ENCODE measurements at regions of chr16 and their contacts with region 1.

Region 1: GRCh38 chr16:84599521-84600202 is 18.2 kb downstream of the COTL1 start:
- DNase-seq: peak; percentile 90
- ATAC-seq: peak; percentile 58
- H3K4me3 Mint-ChIP-seq: peak overlapping the region; percentile 74
- H3K27ac Mint-ChIP-seq: peak overlapping the region; percentile 97
- H3K4me1 Mint-ChIP-seq: peaks cover 94% of the 10 kb centered on the region
- H3K27me3 Mint-ChIP-seq: no peaks in the 10 kb centered on the region

Region 2: GRCh38 chr16:84641643-84642358 is 42.1 kb after region 1 on chr16:
- CTCF ChIA-PET with region 1: interaction called, 3 read pairs
- POLR2A ChIA-PET with region 1: interaction called, 10 read pairs
- intact Hi-C with region 1: no loop called
- DNase-seq: peak; percentile 31
- ATAC-seq: no peak
- H3K4me3 Mint-ChIP-seq: peak overlapping the region; percentile 53
- H3K27ac Mint-ChIP-seq: peak overlapping the region; percentile 67
- H3K4me1 Mint-ChIP-seq: peaks cover 41% of the 10 kb centered on the region
- H3K27me3 Mint-ChIP-seq: no peaks in the 10 kb centered on the region

Region 3: DNA sequence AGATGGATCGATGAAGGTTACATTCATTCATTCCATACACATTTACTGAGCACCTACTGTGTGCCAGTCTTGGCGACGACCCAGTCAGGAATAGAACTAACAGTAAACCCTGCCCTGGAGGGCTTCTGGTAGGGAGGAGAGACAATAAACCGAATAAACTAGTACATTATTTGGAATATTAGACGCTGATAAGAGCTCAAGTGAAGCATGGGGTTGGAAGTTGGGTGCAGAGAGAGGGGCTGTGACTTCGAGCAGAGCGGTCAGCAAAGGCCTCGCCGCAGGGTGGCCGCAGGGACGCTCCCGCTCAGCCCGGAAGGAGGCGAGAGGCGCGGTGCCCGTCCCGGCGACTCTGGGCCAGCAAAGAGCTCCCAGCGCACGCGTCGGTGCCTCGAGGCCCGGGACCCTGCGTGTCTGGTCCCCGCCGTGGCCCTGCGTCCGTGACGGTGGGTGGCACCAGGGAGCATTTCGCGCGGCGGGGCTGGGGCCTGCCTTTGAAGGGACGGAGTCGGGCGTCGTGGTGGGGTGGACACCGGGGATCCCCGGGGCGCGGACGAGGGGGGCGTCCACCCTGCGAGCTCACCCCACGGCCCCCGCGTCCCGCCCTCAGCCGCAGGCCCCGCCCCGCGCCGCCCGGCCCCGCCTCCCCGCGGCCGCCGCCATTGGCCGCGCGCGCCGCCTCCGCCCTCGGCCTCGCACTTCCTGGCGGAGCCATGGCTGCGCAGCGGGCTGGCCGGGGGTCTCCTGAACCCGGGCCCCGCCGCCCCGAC is 48.3 kb after region 1 on chr16 and contains the start of gene KLHL36:
- CTCF ChIA-PET with region 1: interaction called, 3 read pairs
- POLR2A ChIA-PET with region 1: no interaction called
- intact Hi-C with region 1: loop called in 1 of 2 experiments (anchors 1 kb)
- DNase-seq: peak; percentile 79
- ATAC-seq: peak; percentile 85
- H3K4me3 Mint-ChIP-seq: peak within 1 kb of the TSS; percentile 76
- H3K27ac Mint-ChIP-seq: peak within 1 kb of the TSS; percentile 80
- H3K4me1 Mint-ChIP-seq: peaks cover 43% of the 10 kb centered on the region
- H3K27me3 Mint-ChIP-seq: no peaks in the 10 kb centered on the region
- total RNA-seq, gene KLHL36: 31.1 to 43.2 TPM